Activated T-helper 2 cell treated with anti-CD3 and anti-CD28 coated beads, Interferon-gamma antibody, Interleukin-2, Interleukin-4, amounts not matched to agents 10 μg/mL and 5 μg/mL and 100 μg/mL, durations not matched to agents 14 hours and 24 hours and 36 hours (primary cell): ENCODE measurements at regions of chr12 and their contacts with region 1.

Region 1: GRCh38 chr12:53696285-53696654 is 20.4 kb upstream of the ATP5MC2 start:
- DNase-seq: no peak
- H3K4me3 Mint-ChIP-seq: no peak overlapping the region
- H3K27ac Mint-ChIP-seq: no peak overlapping the region
- H3K4me1 Mint-ChIP-seq: peaks cover 20% of the 10 kb centered on the region
- H3K27me3 Mint-ChIP-seq: peaks cover 76% of the 10 kb centered on the region

Region 2: GRCh38 chr12:53625946-53626701 is 70.1 kb before region 1 on chr12 and contains the start of gene ATF7:
- intact Hi-C with region 1: no loop called
- DNase-seq: peak; percentile 97
- H3K4me3 Mint-ChIP-seq: peak within 1 kb of the TSS; percentile 100
- H3K27ac Mint-ChIP-seq: peak within 1 kb of the TSS; percentile 79
- H3K4me1 Mint-ChIP-seq: peaks cover 35% of the 10 kb centered on the region
- H3K27me3 Mint-ChIP-seq: peaks cover 2% of the 10 kb centered on the region
- total RNA-seq, gene ATF7: 28.0 and 32.0 TPM in 2 replicates

Region 3: GRCh38 chr12:53712059-53712643 is 15.9 kb after region 1 on chr12:
- intact Hi-C with region 1: no loop called
- DNase-seq: no peak
- H3K4me3 Mint-ChIP-seq: no peak overlapping the region
- H3K27ac Mint-ChIP-seq: no peak overlapping the region
- H3K4me1 Mint-ChIP-seq: no peaks in the 10 kb centered on the region
- H3K27me3 Mint-ChIP-seq: peaks cover 12% of the 10 kb centered on the region

Region 4: GRCh38 chr12:53928054-53928835 is 232.0 kb after region 1 on chr12:
- intact Hi-C with region 1: loop called (anchors 5 kb)
- DNase-seq: no peak
- H3K4me3 Mint-ChIP-seq: no peak overlapping the region
- H3K27ac Mint-ChIP-seq: no peak overlapping the region
- H3K4me1 Mint-ChIP-seq: no peaks in the 10 kb centered on the region
- H3K27me3 Mint-ChIP-seq: peaks cover 90% of the 10 kb centered on the region

Region 5: DNA sequence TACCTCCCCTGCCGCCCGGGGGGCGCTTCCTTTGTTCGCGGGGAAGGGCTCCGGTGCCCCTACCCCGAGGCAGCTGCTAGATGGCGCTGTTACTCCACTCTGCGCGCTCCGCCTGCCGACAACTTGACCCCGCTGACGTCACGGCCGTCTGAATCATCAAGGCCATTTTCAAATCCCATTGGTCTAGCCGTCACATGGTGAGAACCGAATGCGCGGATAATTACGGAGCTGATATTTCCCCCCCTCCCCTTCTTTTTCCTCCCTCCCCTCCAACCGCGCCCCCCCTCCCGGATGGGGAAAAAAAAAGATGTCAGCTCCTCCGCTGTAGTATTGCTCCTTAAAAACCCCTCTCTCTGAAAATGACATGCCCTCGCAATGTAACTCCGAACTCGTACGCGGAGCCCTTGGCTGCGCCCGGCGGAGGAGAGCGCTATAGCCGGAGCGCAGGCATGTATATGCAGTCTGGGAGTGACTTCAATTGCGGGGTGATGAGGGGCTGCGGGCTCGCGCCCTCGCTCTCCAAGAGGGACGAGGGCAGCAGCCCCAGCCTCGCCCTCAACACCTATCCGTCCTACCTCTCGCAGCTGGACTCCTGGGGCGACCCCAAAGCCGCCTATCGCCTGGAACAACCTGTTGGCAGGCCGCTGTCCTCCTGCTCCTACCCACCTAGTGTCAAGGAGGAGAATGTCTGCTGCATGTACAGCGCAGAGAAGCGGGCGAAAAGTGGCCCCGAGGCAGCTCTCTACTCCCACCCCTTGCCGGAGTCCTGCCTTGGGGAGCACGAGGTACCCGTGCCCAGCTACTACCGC is 288.8 kb after region 1 on chr12 and contains the start of gene HOXC10:
- intact Hi-C with region 1: loop called (anchors 10 kb)
- DNase-seq: peak; percentile 69
- H3K4me3 Mint-ChIP-seq: peak within 1 kb of the TSS; percentile 7
- H3K27ac Mint-ChIP-seq: no peak within 1 kb of the TSS
- H3K4me1 Mint-ChIP-seq: peaks cover 20% of the 10 kb centered on the region
- H3K27me3 Mint-ChIP-seq: peaks cover 90% of the 10 kb centered on the region
- total RNA-seq, gene HOXC10: not detected in 2 replicates